PC-3 (cell line): ENCODE measurements at regions of chr6 and their contacts with region 1.

Region 1: DNA sequence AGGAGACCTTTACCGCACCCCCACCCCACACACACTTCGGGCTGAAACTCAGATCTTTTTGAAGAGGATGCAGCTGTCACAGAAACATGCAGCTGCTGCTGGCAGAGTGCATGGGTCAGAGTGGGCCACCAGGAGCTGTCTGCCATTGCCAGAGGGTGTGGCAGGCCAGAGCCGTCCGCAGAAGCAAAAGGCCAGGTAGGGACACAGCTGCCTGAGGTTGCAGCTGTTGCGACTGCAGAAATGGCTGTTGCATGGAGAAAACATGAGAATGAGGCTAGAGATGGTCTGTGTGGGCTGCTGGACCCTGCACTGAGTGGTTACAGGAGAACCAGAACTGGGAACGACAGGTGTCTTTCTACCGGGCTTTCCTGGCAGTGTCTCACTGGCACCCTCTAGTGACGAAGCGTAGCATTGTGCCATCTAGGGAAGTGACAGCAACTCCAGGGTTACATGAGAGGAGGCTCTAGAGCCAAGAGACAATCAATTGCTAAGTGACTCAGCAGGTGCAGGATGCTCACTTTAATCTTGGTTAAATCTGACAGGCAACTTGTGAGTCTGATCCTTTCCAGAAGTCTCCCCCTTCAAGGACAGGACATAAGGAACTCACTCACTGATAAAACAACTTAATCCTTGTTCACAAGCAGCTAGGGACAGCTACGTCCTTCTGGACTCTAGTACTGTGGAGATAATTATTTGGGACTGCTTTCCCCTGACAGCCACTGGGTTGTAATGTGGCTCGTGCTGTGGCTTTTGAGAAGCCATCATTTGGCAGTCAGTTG is 29.1 kb upstream of the SERPINB9 start:
- DNase-seq: peak; percentile 97
- ATAC-seq: peak; percentile 99
- H3K4me3 ChIP-seq: no peak overlapping the region
- H3K27ac ChIP-seq: peak overlapping the region; percentile 16; the same call in 1 of the 2 replicates
- H3K4me1 ChIP-seq: peaks cover 4% of the 10 kb centered on the region; the same call in 1 of the 2 replicates
- H3K27me3 ChIP-seq: no peaks in the 10 kb centered on the region
- CTCF ChIP-seq: peak; percentile 96

Region 2: DNA sequence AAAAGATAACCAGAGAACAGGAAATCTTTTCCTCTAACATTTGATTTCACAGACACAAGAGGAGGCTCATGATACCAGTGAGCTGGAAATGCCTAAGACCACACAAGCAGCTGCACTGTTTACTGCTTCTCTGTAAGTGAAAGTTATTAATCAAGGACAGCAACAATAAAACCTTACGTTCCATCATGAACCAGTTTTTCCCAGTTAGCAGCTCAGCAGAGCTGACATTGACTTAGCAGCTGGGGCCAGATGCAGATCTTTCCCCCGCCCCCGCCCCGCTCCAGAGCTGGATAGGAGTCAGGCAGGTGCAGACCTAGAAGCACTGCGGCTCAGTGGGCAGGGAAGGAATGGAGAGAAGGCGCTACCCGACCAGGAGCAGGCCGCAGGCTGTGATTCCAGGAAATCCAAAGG is 962.0 kb before region 1 on chr6:
- CTCF ChIA-PET with region 1: no interaction called
- POLR2A ChIA-PET with region 1: no interaction called
- intact Hi-C with region 1: no loop called
- DNase-seq: no peak
- ATAC-seq: no peak
- H3K4me3 ChIP-seq: no peak overlapping the region
- H3K27ac ChIP-seq: no peak overlapping the region
- H3K4me1 ChIP-seq: no peaks in the 10 kb centered on the region
- H3K27me3 ChIP-seq: no peaks in the 10 kb centered on the region
- CTCF ChIP-seq: no peak

Region 3: DNA sequence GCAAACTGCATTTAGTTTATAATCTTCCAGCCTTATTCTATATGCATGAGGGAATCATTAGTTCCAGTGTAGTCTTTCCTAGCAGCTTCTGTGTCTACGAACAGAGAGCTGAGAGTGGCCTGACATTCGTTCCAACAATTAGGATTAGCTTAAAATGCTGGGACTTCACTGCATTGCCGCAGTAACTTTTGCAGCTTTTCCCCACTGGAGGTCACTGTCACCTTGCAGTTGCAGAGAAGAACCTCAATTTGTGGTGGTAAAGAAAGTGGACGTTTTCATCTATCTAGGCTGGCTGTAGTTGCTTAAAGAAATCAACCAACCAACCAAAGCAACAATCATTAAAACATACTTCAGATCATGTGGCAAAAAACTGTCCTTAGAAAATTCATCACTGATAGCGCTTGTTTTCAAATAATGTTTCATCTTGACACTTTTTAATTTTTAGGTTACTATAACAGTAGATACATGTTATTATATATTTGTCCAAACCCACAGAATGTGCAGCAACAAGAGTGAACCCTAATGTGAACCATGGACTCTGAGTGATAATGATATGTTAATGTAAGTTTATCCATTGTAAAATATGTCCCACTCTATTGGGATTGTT is 193.7 kb before region 1 on chr6:
- CTCF ChIA-PET with region 1: interaction called, 3 read pairs
- POLR2A ChIA-PET with region 1: no interaction called
- intact Hi-C with region 1: loop called (anchors 1 kb)
- DNase-seq: peak; percentile 80
- ATAC-seq: peak; percentile 84
- H3K4me3 ChIP-seq: no peak overlapping the region
- H3K27ac ChIP-seq: no peak overlapping the region
- H3K4me1 ChIP-seq: peaks cover 5% of the 10 kb centered on the region; the same call in 1 of the 2 replicates
- H3K27me3 ChIP-seq: no peaks in the 10 kb centered on the region
- CTCF ChIP-seq: peak; percentile 95

Region 4: DNA sequence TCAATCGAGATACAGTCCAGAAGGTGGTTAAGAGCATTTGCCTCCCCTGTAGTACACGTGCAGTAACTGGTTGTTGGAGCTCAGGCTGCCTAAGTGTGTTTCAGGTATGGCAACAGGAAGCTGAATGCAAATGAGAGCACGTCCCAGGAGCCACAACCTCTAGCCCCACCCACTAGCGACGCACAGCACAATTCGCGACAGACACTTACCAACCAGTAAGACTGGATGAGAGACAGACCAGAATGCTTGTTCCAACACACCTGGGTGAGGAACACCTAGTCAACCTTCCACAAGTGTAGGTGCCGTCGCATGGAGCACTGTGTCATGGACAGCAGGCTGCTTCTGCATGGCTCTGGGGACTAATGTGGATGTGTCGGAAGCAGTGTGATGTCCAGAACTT is 83.3 kb before region 1 on chr6:
- CTCF ChIA-PET with region 1: interaction called, 11 read pairs
- POLR2A ChIA-PET with region 1: no interaction called
- intact Hi-C with region 1: loop called (anchors 1 kb)
- DNase-seq: no peak
- ATAC-seq: no peak
- H3K4me3 ChIP-seq: no peak overlapping the region
- H3K27ac ChIP-seq: no peak overlapping the region
- H3K4me1 ChIP-seq: peaks cover 33% of the 10 kb centered on the region
- H3K27me3 ChIP-seq: no peaks in the 10 kb centered on the region
- CTCF ChIP-seq: no peak

Region 5: DNA sequence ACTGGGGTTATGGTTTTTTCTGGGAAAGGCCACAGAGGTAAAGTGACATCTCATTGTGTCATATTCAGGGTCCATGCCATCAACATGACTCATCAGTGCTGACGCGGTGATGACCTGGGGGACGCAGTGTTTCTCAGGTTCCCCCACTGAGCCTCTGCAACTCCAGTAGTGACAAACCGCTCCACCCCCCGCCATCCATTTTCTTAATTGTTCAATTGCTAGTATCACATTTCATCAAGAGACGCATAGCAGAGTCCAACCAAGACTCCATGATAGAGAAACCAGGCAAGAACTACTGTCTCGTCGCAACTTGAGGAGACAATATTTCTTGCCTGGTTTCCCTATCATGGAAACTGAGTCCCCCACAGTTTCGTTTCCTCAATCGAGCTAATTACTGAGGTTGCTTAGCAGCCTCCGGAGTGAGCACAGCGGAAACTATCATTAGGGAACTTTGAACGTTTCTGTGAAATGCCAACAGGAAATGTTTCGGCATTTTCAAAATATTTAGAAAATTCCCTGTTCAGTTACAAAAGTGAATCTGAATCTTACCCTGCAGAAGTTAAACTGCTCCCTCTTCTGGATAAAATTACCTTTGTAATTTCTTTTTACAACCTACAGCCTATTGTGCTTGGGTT is 78.3 kb before region 1 on chr6:
- CTCF ChIA-PET with region 1: interaction called, 3 read pairs
- POLR2A ChIA-PET with region 1: no interaction called
- intact Hi-C with region 1: loop called (anchors 2 kb)
- DNase-seq: peak; percentile 95
- ATAC-seq: peak; percentile 63
- H3K4me3 ChIP-seq: peak overlapping the region; percentile 68
- H3K27ac ChIP-seq: peak overlapping the region; percentile 99
- H3K4me1 ChIP-seq: peaks cover 40% of the 10 kb centered on the region
- H3K27me3 ChIP-seq: no peaks in the 10 kb centered on the region
- CTCF ChIP-seq: peak; percentile 66